ENCODE measurements at regions of chr11 and their contacts with region 1.

Region 1: DNA sequence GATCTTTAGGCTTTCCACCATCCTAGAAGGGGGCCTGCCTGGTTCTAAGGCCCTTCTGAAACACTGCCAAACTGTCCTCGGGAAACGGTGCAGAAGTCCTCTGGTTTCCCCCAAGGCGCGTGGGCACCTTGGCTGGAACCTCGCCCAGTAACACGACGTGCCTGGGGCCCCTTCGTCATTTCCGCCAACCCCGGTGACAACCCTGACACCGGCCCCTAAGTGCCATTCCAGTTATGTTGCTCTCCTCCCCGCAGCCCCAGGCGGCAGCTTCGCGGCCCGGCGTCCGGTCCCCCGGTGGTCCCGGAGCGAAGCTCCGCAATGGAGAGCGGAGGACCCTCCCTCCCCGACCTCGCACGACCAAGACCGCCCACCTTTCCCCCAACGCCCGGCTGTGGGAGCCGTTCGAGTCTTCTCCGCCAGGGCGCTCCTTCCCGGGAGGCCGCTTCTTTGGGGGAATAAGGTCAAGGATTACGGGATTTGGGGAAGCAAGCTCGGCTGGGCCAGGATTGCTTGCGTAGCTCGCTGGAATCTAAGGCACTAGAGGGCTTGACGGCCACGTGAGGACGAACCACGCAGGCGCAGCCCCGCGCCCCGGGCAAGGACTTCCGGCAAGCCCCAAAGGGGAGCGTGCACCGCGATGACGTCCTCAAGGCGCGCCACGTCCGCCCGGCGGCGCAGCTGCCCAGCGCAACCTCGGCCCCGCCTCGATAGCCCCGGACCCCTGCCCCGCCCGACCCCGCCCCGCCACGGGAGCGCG is 626 bp downstream of the RNH1 start:
- DNase-seq: peak; percentile 97 to 99
- ATAC-seq: peak; percentile 71 to 87 (median 75)
- H3K4me3 ChIP-seq: peak overlapping the region; percentile 98
- H3K4me3 Mint-ChIP-seq: peak overlapping the region; percentile 97
- H3K27ac ChIP-seq: peak overlapping the region; percentile 100
- H3K27ac Mint-ChIP-seq: peak overlapping the region; percentile 97 to 99
- H3K4me1 ChIP-seq: peaks cover 52% of the 10 kb centered on the region
- H3K4me1 Mint-ChIP-seq: peaks cover 8 to 18% of the 10 kb centered on the region in 2 donors
- H3K27me3 ChIP-seq: no peaks in the 10 kb centered on the region
- H3K27me3 Mint-ChIP-seq: no peaks in the 10 kb centered on the region
- CTCF ChIP-seq: no peak

Region 2: GRCh38 chr11:406978-407739 is 99.3 kb before region 1 on chr11:
- intact Hi-C with region 1: loop called (anchors 5 kb)
- DNase-seq: peak; percentile 97 to 98
- ATAC-seq: peak; percentile 92 to 96 (median 93)
- H3K4me3 ChIP-seq: no peak overlapping the region
- H3K4me3 Mint-ChIP-seq: peak overlapping the region; percentile 50
- H3K27ac ChIP-seq: peak overlapping the region; percentile 87
- H3K27ac Mint-ChIP-seq: peak overlapping the region; percentile 73 to 82
- H3K4me1 ChIP-seq: peaks cover 47% of the 10 kb centered on the region
- H3K4me1 Mint-ChIP-seq: peaks cover 0 to 18% of the 10 kb centered on the region in 2 donors
- H3K27me3 ChIP-seq: no peaks in the 10 kb centered on the region
- H3K27me3 Mint-ChIP-seq: no peaks in the 10 kb centered on the region
- CTCF ChIP-seq: no peak

Region 3: DNA sequence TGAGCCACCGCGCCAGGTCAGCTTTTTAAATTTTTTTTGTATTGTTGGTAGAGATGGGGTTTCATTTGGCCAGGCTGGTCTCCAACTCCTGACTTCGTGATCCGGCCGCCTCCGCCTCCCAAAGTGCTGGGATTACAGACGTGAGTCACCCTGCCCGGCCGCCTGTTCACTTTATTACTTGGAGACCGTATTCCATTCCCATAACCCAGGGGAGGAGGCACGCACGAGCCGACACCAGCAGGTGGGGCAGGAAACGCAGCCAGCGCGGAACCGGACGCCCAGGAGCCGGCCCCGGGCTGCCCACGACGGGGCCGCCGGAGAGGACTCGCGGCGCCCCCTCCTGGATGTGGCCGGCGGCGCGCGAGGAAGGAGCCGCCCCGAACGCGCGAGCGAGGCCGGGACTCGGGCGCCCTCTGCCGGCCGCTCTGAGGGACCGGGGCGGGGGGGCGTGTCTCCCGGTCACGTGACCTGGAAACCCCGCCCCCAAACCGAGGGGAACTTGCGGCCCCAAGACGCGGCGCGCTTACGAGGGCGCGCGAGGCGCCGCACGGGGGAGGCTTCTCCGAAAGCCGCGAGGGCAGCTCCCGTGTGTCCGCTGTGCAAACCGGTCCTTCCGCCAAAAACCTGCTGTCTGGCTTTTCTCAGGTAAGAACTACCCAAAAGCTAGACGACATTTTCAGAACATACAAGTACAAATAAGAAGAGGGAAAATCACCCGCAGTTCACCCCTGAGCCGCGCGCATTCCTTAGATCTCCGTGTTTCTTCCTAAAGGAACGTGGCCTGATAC is 12.2 kb after region 1 on chr11:
- intact Hi-C with region 1: loop called (anchors 1 kb)
- DNase-seq: peak; percentile 85 to 94
- ATAC-seq: peak; percentile 96 to 100 (median 97)
- H3K4me3 ChIP-seq: peak overlapping the region; percentile 2
- H3K4me3 Mint-ChIP-seq: peak overlapping the region; percentile 90
- H3K27ac ChIP-seq: no peak overlapping the region
- H3K27ac Mint-ChIP-seq: peak overlapping the region; percentile 53 to 65
- H3K4me1 ChIP-seq: peaks cover 9% of the 10 kb centered on the region
- H3K4me1 Mint-ChIP-seq: peaks cover 0 to 7% of the 10 kb centered on the region in 2 donors
- H3K27me3 ChIP-seq: no peaks in the 10 kb centered on the region
- H3K27me3 Mint-ChIP-seq: no peaks in the 10 kb centered on the region
- CTCF ChIP-seq: peak; percentile 99